ENCODE measurements at regions of chr11 and their contacts with region 1.

Region 1: GRCh38 chr11:33419924-33420323 is 162.7 kb downstream of the HIPK3 start:
- DNase-seq: no peak
- ATAC-seq: no peak
- H3K4me3 Mint-ChIP-seq: no peak overlapping the region
- H3K27ac Mint-ChIP-seq: no peak overlapping the region
- H3K4me1 Mint-ChIP-seq: no peaks in the 10 kb centered on the region
- H3K27me3 Mint-ChIP-seq: peaks cover 11% of the 10 kb centered on the region
- CTCF ChIP-seq: no peak

Region 2: GRCh38 chr11:33402066-33402465 is 17.9 kb before region 1 on chr11:
- CTCF ChIA-PET with region 1: no interaction called
- POLR2A ChIA-PET with region 1: no interaction called
- intact Hi-C with region 1: no loop called
- DNase-seq: no peak
- ATAC-seq: no peak
- H3K4me3 Mint-ChIP-seq: no peak overlapping the region
- H3K27ac Mint-ChIP-seq: no peak overlapping the region
- H3K4me1 Mint-ChIP-seq: no peaks in the 10 kb centered on the region
- H3K27me3 Mint-ChIP-seq: peaks cover 2% of the 10 kb centered on the region
- CTCF ChIP-seq: no peak

Region 3: DNA sequence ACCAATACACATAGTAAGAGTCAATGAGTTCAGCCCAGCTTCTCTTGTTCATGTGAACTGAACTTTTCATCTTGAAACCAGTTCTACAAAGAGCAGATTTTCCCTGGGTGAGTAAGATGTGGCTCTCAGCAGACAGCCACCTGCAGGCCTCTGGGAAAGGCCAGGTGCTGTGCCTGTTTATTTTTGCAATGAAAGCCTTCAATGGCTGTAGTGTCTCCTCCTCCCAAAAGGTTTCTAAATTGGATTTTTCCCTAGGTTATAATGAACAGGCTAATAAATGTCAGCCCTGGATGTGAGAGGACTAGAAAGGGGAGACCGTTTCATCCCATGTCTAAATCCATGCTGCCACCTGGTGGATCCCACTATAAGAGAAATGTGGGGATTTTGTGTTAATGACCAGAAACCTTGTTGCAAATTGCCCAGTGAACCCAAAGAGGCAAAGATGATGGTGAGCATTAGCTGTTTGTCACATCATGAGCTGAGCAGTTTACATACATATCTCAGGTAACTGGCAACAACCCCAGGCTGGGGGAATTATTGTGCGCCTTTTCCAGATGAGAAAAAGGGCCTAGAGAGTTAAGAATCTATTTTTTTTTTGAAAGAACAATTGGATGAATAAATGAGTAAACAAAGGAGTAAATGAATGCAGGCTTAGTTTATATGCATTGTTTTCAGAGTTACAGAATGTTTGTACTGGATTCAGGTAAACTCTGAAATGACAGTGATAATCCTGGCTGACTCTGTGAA is 268.0 kb after region 1 on chr11:
- CTCF ChIA-PET with region 1: no interaction called
- POLR2A ChIA-PET with region 1: interaction called, 10 read pairs
- intact Hi-C with region 1: no loop called
- DNase-seq: no peak
- ATAC-seq: no peak
- H3K4me3 Mint-ChIP-seq: no peak overlapping the region
- H3K27ac Mint-ChIP-seq: no peak overlapping the region
- H3K4me1 Mint-ChIP-seq: no peaks in the 10 kb centered on the region
- H3K27me3 Mint-ChIP-seq: peaks cover 10% of the 10 kb centered on the region
- CTCF ChIP-seq: no peak

Measured in activated B cell treated with CpG ODN at 0.5 μM for 24 hours (primary cell).